Heart left ventricle (tissue), 16 donors: ENCODE measurements at regions of chr11 and their contacts with region 1.

Region 1: GRCh38 chr11:12469451-12469850 is 92.1 kb downstream of the PARVA start:
- DNase-seq: no peak
- ATAC-seq: peak in 3 of 4 donors; percentile 33 to 45 (median 42)
- H3K4me3 ChIP-seq: peak overlapping the region in 4 of 12 donors; percentile 1 to 43 (median 20)
- H3K27ac ChIP-seq: peak overlapping the region in 7 of 12 donors; percentile 8 to 74 (median 32)
- H3K4me1 ChIP-seq: peaks cover 0 to 53% (median 25%) of the 10 kb centered on the region in 12 donors
- H3K27me3 ChIP-seq: no peaks in the 10 kb centered on the region
- CTCF ChIP-seq: no peak
- POLR2A ChIP-seq: no peak

Region 2: DNA sequence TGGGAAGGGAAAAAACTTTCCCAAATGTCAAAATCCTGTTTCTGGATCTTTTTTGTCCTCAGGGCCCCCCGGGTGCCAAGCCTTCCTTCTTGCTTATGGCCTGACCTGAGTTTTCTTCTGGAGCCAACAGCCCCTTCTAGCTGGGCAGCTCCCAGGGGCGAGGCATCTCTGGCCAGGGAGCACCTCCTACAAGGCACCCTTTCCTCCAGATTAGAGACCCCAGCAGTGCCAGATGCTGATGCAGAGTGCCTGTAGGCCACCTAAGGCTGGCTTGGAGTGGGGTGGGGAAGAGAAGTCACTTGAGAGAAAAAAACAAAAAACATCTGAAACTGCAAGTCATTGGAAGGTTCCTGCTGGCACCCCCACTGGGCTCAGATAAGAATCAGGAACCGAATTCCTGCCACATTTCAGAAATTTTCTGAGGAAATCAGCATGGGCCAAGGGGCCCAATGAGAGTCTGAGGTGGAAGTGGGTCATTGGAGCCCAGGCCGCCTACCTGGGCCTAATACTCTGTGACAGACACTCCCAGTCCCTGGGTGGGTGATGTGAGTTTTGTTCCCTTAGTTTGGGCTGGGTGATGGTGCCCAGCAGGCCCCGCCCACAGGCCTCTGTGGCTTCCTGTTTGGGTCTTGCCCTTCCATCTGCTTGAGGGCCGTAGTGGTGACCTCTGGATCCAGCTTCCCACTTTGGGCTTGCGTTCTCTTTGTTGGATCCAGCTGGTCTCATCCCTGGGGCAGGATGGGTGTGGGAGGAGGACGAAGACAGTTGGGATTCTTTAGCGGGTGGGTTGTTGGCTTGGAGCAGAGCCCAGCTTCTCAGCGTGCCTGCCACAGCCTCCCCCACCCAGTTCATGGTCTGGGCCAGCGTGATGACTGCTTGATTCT is 51.5 kb before region 1 on chr11:
- intact Hi-C with region 1: loop called in 1 of 10 experiments (anchors 5 kb)
- DNase-seq: peak in 3 of 5 donors; percentile 29 to 68 (median 52)
- ATAC-seq: peak in 3 of 4 donors; percentile 38 to 58 (median 51)
- H3K4me3 ChIP-seq: no peak overlapping the region
- H3K27ac ChIP-seq: peak overlapping the region in 3 of 12 donors; percentile 5 to 98 (median 6)
- H3K4me1 ChIP-seq: peaks cover 5 to 41% (median 22%) of the 10 kb centered on the region in 12 donors
- H3K27me3 ChIP-seq: no peaks in the 10 kb centered on the region
- CTCF ChIP-seq: no peak
- POLR2A ChIP-seq: no peak